PC-9 (cell line): ENCODE measurements at regions of chr16 and their contacts with region 1.

Region 1: DNA sequence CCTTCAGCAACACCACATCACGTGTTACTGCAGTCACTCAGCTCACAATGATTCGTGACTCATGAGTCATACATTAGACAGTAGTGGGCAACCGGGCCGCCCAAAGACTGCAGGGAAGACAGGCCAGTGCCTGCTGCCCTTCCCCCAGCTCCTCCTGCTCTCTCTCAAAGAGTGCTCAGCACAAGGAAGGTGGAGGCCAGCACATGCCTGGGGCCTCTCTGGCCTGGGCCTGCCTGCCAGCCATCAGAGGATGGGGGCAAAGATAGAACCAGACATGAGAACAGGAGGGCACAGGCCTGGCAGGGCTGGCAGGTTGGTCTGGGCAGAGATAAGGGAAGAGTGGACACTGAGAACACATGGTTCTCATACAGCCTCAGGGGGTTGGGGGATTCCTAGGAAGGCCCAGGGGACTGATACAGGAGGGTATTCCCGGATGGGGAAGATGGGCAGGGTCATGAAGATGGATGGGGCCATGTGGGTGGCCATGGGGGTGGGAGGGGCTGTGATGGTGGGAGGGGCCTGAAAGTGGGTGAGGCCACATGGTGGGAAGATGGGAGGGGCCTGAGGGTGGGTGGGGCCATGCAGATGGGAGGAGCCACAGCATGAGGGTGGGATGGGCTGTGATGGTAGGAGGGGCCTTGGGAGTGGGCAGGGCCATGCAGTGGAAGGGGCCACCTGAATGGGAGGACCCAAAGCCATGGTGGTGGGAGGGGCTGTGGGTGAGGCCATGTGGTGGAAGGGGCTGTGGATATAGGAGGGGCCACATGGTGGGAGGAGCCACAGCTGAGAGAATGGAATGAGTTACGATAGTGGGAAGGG is 29.0 kb downstream of the KATNB1 start:
- DNase-seq: peak; percentile 69 to 78
- H3K4me3 ChIP-seq: no peak overlapping the region
- H3K27ac ChIP-seq: peak overlapping the region; percentile 83
- H3K4me1 ChIP-seq: peaks cover 25% of the 10 kb centered on the region
- H3K27me3 ChIP-seq: no peaks in the 10 kb centered on the region
- CTCF ChIP-seq: no peak

Region 2: DNA sequence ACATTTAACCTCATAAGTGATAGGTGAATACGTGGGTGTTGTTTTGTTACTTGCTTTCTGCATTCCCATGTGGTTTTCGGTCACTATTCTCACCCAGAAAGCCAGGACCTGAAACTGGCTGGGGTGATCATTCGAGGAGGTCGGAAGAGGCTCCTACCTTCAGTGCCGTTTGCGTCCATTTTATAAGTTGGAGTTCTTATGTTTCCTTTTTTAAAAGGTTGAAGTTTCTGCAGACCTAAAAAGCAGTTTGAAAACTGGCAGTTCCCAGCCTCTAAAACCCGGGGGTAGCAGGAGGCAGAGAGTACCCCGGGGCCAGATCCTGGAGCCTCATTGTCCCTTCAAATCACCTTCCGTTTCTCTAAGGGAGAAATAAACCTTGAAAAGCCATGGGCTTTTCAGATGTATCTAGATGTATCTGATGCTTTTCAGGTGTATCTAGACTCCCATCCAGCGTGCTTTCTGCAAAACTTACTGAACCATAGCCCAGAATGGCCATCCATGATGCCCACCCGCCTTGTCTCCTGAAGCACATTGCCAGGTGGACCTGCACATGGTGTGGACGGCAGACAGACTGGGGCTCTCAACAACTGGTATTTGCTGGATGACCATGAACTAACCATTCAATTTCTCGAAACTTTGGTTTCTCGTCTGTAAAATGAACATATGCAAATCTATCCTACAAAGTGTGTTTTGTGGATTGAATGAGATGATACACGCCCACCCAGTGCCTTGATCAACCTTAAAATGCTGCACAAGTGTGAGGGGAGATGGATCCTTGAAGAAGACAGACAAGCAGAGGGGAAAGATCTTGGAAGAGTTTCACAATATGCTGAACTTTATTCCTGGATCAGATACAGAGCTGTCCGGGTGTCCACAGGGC is 773.9 kb before region 1 on chr16:
- CTCF ChIA-PET with region 1: no interaction called
- POLR2A ChIA-PET with region 1: no interaction called
- intact Hi-C with region 1: no loop called
- DNase-seq: no peak
- H3K4me3 ChIP-seq: peak overlapping the region; percentile 66
- H3K27ac ChIP-seq: no peak overlapping the region
- H3K4me1 ChIP-seq: peaks cover 19% of the 10 kb centered on the region
- H3K27me3 ChIP-seq: no peaks in the 10 kb centered on the region
- CTCF ChIP-seq: no peak

Region 3: DNA sequence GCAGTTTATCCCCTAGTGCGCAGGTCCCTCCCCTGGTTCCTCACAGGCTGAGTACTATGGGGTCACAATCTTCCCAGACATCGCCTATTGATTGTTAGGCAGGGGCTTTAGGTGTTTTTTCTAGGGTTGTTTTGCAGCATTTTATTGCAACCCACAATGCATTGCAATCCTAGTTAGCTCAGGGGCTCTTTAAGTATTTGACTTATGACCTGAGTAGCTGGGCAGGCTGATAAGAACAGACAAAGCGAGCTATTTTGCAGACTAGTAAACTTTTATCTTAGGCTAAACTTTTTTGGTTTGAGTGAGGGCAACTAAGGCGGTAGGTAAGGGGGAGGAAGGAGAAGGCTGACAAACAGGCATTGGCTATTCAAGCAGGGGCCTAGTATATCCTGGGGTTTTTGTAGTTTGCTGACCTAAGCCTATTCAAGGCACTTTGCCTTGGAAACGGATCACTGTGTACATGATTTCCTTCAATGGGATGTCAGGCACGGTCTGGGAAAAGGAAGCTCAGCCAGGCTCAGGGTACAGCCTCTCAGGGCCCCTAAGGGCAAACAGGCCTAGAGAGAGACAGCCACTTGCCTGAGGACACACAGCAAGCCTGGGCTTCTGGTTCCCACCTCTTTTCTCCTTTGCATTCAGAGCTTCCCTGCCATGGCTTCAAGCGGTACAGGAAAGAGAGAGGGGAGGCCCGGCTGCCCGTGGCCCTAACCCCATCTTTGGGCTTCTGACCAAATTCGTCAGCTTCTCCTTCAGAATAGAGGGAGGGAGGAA is 63.6 kb before region 1 on chr16:
- CTCF ChIA-PET with region 1: no interaction called
- POLR2A ChIA-PET with region 1: no interaction called
- intact Hi-C with region 1: loop called (anchors 2 kb)
- DNase-seq: no peak
- H3K4me3 ChIP-seq: no peak overlapping the region
- H3K27ac ChIP-seq: no peak overlapping the region
- H3K4me1 ChIP-seq: no peaks in the 10 kb centered on the region
- H3K27me3 ChIP-seq: no peaks in the 10 kb centered on the region
- CTCF ChIP-seq: no peak